SK-MEL-5 (cell line): ENCODE measurements at regions of chr9 and their contacts with region 1.

Region 1: DNA sequence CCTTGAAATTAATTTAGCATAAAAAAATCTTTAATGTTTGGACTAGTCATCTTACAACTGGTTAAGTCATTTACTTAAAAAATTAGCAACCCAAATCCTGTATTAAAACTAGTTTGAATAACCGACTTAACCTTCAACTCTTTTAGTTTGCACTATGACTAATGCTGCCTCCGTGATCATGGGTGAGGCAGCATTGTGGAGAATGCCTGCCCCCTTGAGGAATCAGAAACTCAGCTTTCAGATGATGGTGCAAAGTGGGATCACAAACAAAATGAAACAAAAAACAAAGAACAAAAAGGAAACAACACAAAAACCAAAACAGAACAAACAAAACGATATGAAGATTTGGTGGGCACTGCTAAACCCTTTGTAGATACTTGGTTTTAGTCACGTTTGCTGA is 127.0 kb upstream of the PALM2AKAP2 start:
- DNase-seq: peak; percentile 56

Region 2: GRCh38 chr9:109320742-109321448 is 332.1 kb before region 1 on chr9 and contains the start of gene EPB41L4B:
- in situ Hi-C with region 1: no loop called
- DNase-seq: peak; percentile 78
- total RNA-seq, gene EPB41L4B: 0.55 and 0.85 TPM in 2 replicates

Region 3: DNA sequence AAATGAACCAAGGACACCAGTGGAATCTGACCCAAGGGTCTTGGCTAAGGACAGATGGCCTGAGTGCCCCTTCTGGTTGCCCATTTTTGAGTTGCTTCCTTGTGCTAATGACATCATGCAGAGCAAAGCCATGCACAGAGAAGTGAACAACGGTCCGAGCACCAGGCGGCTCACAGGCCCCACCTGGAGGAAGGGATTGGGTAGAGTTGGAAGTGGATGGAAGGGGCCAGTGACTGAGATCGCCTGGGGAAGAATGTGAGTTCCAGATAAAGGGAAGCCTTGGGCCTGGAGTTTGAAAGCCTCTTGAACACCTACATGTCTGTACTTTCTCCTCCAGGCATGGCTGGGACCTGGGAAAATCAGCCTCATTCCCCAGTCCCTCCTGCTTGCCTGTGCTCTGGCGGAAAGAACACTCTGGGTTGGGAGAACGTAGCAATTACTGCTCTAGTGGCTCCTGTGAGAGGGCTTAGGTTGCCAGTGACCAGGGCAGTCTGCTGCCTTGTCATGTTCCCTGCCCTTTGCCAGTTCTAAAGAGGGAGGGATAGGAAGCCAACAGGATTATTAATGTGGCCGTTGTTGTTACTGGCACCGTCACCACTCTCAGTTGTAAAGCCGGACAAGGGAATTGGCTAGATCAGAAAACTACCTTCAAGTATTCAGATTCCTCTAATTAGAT is 92.4 kb before region 1 on chr9:
- in situ Hi-C with region 1: no loop called
- DNase-seq: peak; percentile 56

Region 4: DNA sequence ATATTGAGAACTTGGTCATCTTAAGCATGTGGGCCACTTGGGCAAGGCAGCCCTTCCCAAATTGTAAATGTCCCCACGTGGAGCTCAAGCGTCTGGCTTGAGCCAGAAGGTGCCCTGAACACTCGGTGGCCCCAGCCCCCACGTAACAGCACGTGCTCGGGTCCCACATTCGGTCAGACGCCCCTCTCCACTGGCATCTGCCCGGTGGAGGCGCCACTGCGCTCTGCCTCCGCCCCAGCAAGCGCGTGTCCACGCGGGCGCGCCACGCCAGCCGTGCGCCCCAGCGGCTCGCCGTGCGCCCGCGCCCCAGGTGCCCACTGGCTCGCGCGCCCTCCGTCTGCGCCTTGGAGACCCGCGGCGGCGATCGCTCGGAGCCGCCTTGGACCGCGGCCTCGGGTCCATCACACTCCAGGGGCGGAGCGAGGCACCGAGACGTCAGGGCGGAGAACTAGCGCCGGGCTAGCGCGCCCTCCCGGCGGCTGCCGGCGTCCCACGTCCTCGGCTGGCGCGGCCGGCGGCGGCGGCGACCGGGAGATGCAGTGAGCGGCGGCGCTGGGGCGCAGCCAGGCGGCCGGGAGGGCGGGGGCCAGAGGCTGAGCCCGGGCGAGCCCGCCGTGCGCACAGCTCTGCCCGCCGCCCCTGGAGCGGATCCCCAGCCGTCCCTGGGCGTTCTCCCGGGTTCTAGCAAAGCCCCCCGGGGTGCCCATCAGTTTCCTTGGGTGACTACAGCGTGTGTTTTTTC is 126.9 kb after region 1 on chr9 and contains the start of gene PALM2AKAP2:
- in situ Hi-C with region 1: loop called (anchors 25 kb)
- DNase-seq: peak; percentile 59
- total RNA-seq, gene PALM2AKAP2: 0.58 and 0.75 TPM in 2 replicates